ENCODE measurements at regions of chr6 and their contacts with region 1.

Region 1: DNA sequence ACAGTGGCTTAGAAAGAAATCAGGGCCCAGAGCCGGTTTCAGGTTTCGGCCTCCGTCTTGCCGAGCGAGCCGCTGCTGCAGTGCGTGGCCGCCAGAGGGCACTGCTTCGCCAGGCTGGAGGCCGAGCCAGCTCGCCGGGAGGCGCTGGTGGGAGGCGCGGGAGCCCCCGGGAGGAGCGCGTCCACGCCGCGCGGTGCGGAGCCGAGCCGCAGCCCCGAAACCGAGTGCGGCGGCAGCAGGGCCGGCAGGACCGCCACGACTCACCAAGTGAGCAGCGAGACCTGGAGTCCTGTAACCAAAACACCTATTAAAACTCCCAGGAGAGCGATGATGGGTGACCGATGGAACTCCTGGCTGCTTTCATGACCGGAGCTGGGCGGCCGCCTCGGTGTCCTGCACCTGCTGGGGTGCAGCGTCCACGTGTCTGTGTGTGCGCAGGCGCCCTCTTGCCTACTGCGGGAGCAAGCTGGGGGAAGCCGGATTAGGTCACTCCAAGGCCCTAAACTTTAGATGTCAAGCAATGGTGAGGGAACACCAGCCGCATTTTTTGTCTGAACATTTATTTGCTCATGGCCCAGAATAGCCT is 186.9 kb upstream of the UST start:
- DNase-seq: no peak
- ATAC-seq: peak; percentile 97
- H3K4me3 ChIP-seq: 0 out of 2 replicates have a peak overlapping the region, but pooled peaks have one; percentile 39
- H3K27ac ChIP-seq: no peak overlapping the region
- H3K4me1 ChIP-seq: no peaks in the 10 kb centered on the region
- H3K27me3 ChIP-seq: peaks cover 0 to 4% of the 10 kb centered on the region in 2 experiments; a peak in 1 of 4 replicates
- CTCF ChIP-seq: peak; percentile 89 to 95 (median 92)
- EP300 ChIP-seq: no peak
- POLR2A ChIP-seq: no peak
- RAD21 ChIP-seq: peak; percentile 89

Region 2: DNA sequence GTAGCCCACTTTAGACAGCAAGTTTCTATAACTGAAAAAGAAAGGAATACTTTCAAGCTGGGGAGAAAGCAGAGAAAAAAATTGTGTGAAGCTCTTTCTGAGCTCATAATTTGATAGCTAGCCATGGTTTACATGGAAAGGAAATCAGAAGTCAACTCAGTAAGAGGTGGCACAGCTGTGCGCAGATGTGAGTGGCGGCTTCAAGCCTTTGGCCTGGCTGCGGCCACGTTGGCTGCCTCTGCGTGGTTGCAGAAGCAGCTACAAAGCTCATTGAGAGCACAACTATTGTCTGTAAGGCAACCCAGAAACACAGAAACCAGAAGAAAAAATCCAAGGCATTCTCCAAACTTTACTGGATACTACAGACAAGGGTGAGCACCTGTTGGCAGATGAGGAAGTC is 80.4 kb before region 1 on chr6:
- CTCF ChIA-PET with region 1: no interaction called
- POLR2A ChIA-PET with region 1: no interaction called
- RAD21 ChIA-PET with region 1: no interaction called
- SMC1A ChIA-PET with region 1: no interaction called
- in situ Hi-C with region 1: no loop called
- intact Hi-C with region 1: no loop called
- DNase-seq: no peak
- ATAC-seq: no peak
- H3K4me3 ChIP-seq: no peak overlapping the region
- H3K27ac ChIP-seq: no peak overlapping the region
- H3K4me1 ChIP-seq: no peaks in the 10 kb centered on the region
- H3K27me3 ChIP-seq: no peaks in the 10 kb centered on the region
- CTCF ChIP-seq: no peak
- EP300 ChIP-seq: no peak
- POLR2A ChIP-seq: no peak
- RAD21 ChIP-seq: no peak

Region 3: GRCh38 chr6:148509800-148510581 is 50.0 kb before region 1 on chr6:
- CTCF ChIA-PET with region 1: no interaction called
- POLR2A ChIA-PET with region 1: no interaction called
- RAD21 ChIA-PET with region 1: no interaction called
- SMC1A ChIA-PET with region 1: no interaction called
- in situ Hi-C with region 1: no loop called
- intact Hi-C with region 1: no loop called
- DNase-seq: no peak
- ATAC-seq: peak; percentile 66
- H3K4me3 ChIP-seq: no peak overlapping the region
- H3K27ac ChIP-seq: no peak overlapping the region
- H3K4me1 ChIP-seq: no peaks in the 10 kb centered on the region
- H3K27me3 ChIP-seq: peaks cover 0 to 3% of the 10 kb centered on the region in 2 experiments
- CTCF ChIP-seq: no peak
- EP300 ChIP-seq: no peak
- POLR2A ChIP-seq: no peak
- RAD21 ChIP-seq: no peak

Region 4: GRCh38 chr6:148649454-148649963 is 89.6 kb after region 1 on chr6:
- CTCF ChIA-PET with region 1: no interaction called
- POLR2A ChIA-PET with region 1: no interaction called
- RAD21 ChIA-PET with region 1: no interaction called
- SMC1A ChIA-PET with region 1: no interaction called
- in situ Hi-C with region 1: no loop called
- intact Hi-C with region 1: no loop called
- DNase-seq: no peak
- ATAC-seq: peak; percentile 48
- H3K4me3 ChIP-seq: no peak overlapping the region
- H3K27ac ChIP-seq: no peak overlapping the region
- H3K4me1 ChIP-seq: peaks cover 3% of the 10 kb centered on the region; the same call in 1 of the 2 replicates
- H3K27me3 ChIP-seq: no peaks in the 10 kb centered on the region; a peak in 1 of 4 replicates
- CTCF ChIP-seq: no peak
- EP300 ChIP-seq: no peak
- POLR2A ChIP-seq: no peak
- RAD21 ChIP-seq: no peak

Region 5: DNA sequence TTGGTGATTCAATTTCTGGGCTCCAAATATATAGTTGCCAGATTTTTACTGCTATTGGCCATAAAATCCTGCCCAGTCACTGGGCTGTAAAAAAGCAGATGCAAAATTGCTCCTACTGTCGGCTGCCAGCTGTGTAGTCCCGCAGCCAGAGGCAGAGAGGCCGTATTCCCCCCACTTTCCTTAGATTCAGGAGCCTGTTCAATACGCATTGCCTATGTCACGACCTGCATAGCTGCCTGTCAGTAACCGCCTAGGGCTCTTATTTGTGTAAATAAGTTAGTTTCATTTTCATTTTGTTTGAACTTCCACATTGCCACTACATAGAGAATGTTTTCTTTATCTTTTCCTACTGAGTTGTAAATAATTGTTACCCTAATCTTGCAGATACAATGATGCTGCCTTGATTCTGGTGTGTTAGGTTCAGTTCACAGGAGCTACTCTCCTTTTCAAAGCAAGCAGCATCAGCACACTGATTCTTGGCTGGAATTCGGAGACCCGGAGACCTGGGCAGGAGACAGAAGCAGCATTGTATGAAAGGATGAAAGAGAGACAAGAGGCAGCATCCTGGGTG is 140.9 kb after region 1 on chr6:
- CTCF ChIA-PET with region 1: interaction called, 4 read pairs
- POLR2A ChIA-PET with region 1: no interaction called
- RAD21 ChIA-PET with region 1: interaction called, 3 read pairs
- SMC1A ChIA-PET with region 1: no interaction called
- in situ Hi-C with region 1: no loop called
- intact Hi-C with region 1: loop called (anchors 5 kb)
- DNase-seq: no peak
- ATAC-seq: peak; percentile 90
- H3K4me3 ChIP-seq: peak overlapping the region; percentile 46; the same call in 1 of the 2 replicates
- H3K27ac ChIP-seq: no peak overlapping the region
- H3K4me1 ChIP-seq: 0 out of 2 replicates have a peak, but pooled peaks cover 3% of the 10 kb centered on the region
- H3K27me3 ChIP-seq: no peaks in the 10 kb centered on the region
- CTCF ChIP-seq: no peak
- EP300 ChIP-seq: no peak
- POLR2A ChIP-seq: no peak
- RAD21 ChIP-seq: no peak

Region 6: GRCh38 chr6:148947621-148948444 is 387.9 kb after region 1 on chr6:
- CTCF ChIA-PET with region 1: interaction called, 6 read pairs
- POLR2A ChIA-PET with region 1: no interaction called
- RAD21 ChIA-PET with region 1: no interaction called
- SMC1A ChIA-PET with region 1: no interaction called
- in situ Hi-C with region 1: no loop called
- intact Hi-C with region 1: loop called (anchors 1 kb)
- DNase-seq: peak; percentile 27
- ATAC-seq: peak; percentile 94
- H3K4me3 ChIP-seq: no peak overlapping the region
- H3K27ac ChIP-seq: no peak overlapping the region
- H3K4me1 ChIP-seq: no peaks in the 10 kb centered on the region
- H3K27me3 ChIP-seq: no peaks in the 10 kb centered on the region; a peak in 1 of 4 replicates
- CTCF ChIP-seq: peak; percentile 82 to 84 (median 83)
- EP300 ChIP-seq: no peak
- POLR2A ChIP-seq: no peak
- RAD21 ChIP-seq: peak; percentile 87